ENCODE measurements at regions of chr19 and their contacts with region 1.

Region 1: DNA sequence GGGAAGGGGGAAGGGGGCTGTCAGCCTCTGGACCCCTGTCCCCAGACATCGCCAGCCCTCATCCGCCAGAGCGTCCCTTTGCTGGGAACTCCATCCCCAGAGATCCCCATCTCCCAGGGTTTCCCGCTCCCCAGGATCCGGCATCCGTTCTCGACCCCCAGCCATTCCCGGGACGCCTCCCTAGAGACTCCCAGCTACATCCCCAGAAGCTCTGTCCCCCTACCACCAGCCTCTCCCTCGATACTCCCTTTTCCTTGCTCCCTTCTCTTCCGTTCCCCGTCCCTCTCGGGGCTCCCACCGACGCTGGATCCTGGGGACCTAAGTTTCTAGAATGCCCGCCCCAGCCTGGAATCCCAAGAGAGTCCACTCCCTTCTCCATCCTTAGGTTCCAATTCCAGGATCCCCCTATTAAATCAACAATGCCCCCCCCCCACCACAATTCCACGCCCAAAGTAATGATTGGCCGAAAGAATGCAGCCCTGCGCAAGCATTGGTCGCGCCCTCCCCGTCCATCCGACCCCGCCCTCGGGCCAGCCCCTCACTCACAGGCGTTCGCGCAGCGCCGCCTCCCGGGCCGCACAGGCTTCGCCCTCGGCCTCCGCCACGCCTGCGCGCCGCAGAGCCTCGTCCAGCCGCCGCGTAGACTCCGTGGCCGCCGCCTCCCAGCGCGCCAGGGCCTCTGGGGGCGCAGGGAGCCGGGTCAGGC is 3.2 kb downstream of the CCDC194 start:
- DNase-seq: no peak
- H3K4me3 ChIP-seq: peak overlapping the region; percentile 16 to 67 (median 50)
- H3K27ac ChIP-seq: peak overlapping the region in 2 of 4 donors; percentile 42 to 59
- H3K4me1 ChIP-seq: peaks cover 6 to 46% (median 14%) of the 10 kb centered on the region in 3 donors
- H3K27me3 ChIP-seq: peaks cover 0 to 54% (median 0%) of the 10 kb centered on the region in 4 donors
- CTCF ChIP-seq: peak; percentile 75 to 89 (median 82)
- POLR2A ChIP-seq: no peak

Region 2: GRCh38 chr19:17292286-17293097 is 98.3 kb before region 1 on chr19:
- intact Hi-C with region 1: loop called (anchors 10 kb)
- DNase-seq: no peak
- H3K4me3 ChIP-seq: peak overlapping the region; percentile 54 to 72 (median 65)
- H3K27ac ChIP-seq: peak overlapping the region; percentile 68 to 88 (median 79)
- H3K4me1 ChIP-seq: peaks cover 8 to 34% (median 8%) of the 10 kb centered on the region in 3 donors
- H3K27me3 ChIP-seq: peaks cover 0 to 11% (median 0%) of the 10 kb centered on the region in 4 donors
- CTCF ChIP-seq: peak; percentile 60 to 85 (median 66)
- POLR2A ChIP-seq: peak in 1 of 4 donors; percentile 34

Region 3: GRCh38 chr19:17325897-17326598 is 64.8 kb before region 1 on chr19:
- intact Hi-C with region 1: no loop called
- DNase-seq: no peak
- H3K4me3 ChIP-seq: no peak overlapping the region
- H3K27ac ChIP-seq: peak overlapping the region in 1 of 4 donors; percentile 36
- H3K4me1 ChIP-seq: peaks cover 27 to 75% (median 27%) of the 10 kb centered on the region in 3 donors
- H3K27me3 ChIP-seq: peaks cover 0 to 28% (median 2%) of the 10 kb centered on the region in 4 donors
- CTCF ChIP-seq: no peak
- POLR2A ChIP-seq: no peak

Region 4: DNA sequence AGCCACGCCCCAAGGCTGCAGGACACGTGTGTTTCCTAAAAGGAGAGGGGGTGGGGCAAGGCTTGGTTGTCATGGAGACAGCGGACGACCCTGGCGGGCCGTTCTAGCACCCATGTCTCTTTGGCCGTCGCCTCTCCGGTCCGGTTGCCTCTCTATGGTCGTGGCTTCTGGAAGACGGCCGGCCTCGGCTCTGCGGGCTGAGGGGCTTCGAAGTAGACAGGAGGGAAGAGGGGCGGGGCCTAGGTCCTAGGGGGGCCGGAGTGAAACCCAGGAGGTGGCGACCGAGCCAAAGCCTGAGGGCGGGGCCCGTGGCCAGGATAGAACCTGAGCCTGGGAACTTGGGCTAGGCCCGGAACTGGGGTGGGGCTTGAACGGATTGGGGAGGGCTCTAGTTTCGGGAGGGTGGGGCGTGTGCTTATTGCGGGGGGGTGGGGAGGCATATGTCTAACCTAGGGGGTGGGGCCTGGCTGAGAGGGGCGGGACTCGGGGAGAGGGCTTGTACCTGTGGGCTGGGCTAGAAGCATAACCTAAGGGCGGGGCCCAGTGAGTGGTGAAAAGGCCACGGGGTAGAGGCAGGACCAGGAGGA is 78.8 kb after region 1 on chr19:
- intact Hi-C with region 1: loop called (anchors 10 kb)
- DNase-seq: peak; percentile 96
- H3K4me3 ChIP-seq: peak overlapping the region; percentile 64 to 95 (median 84)
- H3K27ac ChIP-seq: peak overlapping the region; percentile 86 to 95 (median 90)
- H3K4me1 ChIP-seq: peaks cover 10 to 67% (median 26%) of the 10 kb centered on the region in 3 donors
- H3K27me3 ChIP-seq: no peaks in the 10 kb centered on the region
- CTCF ChIP-seq: no peak
- POLR2A ChIP-seq: no peak

Measured in esophagus squamous epithelium (tissue), 5 donors.